Heart right ventricle (tissue), 16 donors: ENCODE measurements at regions of chr2 and their contacts with region 1.

Region 1: GRCh38 chr2:42944779-42945415 is 152.5 kb upstream of the HAAO start:
- DNase-seq: no peak
- ATAC-seq: no peak
- H3K4me3 ChIP-seq: no peak overlapping the region
- H3K27ac ChIP-seq: peak overlapping the region in 2 of 10 donors; percentile 23 to 66
- H3K4me1 ChIP-seq: peaks cover 0 to 43% (median 22%) of the 10 kb centered on the region in 9 donors
- H3K27me3 ChIP-seq: no peaks in the 10 kb centered on the region
- CTCF ChIP-seq: no peak

Region 2: DNA sequence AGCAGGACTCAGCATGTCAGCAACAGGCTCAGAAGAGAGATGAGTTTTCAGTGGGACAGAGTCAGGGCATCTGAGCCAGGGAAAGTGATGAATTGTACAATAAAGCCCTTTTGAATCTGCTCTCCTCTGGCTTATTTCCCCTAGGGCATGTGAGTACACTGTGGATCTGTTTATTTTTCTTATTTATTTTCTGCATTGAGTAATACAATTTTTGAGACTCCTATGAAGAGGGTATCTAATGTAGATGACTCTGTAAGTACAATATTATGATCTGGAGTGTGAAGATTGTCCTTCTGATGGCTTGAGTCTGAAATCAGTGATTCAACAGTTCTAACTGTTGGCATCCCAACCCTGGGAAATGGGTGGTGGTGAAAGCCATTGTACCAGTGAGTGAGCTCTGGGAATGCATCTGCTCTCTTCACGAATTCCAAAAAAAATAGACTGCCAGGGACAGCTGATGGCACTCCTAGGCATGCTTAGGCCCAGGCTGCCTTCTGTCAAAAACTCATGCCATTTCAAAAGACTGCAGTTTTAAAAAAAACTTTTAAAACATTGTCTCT is 201.4 kb before region 1 on chr2:
- intact Hi-C with region 1: no loop called
- DNase-seq: no peak
- ATAC-seq: no peak
- H3K4me3 ChIP-seq: no peak overlapping the region
- H3K27ac ChIP-seq: no peak overlapping the region
- H3K4me1 ChIP-seq: no peaks in the 10 kb centered on the region
- H3K27me3 ChIP-seq: no peaks in the 10 kb centered on the region
- CTCF ChIP-seq: no peak

Region 3: GRCh38 chr2:42859006-42859552 is 85.8 kb before region 1 on chr2:
- intact Hi-C with region 1: no loop called
- DNase-seq: peak in 1 of 2 donors; percentile 81
- ATAC-seq: peak in 2 of 8 donors; percentile 30 to 38
- H3K4me3 ChIP-seq: no peak overlapping the region
- H3K27ac ChIP-seq: peak overlapping the region in 6 of 10 donors; percentile 3 to 76 (median 44)
- H3K4me1 ChIP-seq: peaks cover 2 to 30% (median 17%) of the 10 kb centered on the region in 9 donors
- H3K27me3 ChIP-seq: no peaks in the 10 kb centered on the region
- CTCF ChIP-seq: peak; percentile 80 to 93 (median 88)

Region 4: GRCh38 chr2:43484323-43484930 is 539.5 kb after region 1 on chr2:
- intact Hi-C with region 1: loop called in 7 of 10 experiments (anchors 2 to 10 kb)
- DNase-seq: peak in 1 of 2 donors; percentile 20
- ATAC-seq: peak in 6 of 8 donors; percentile 60 to 68 (median 64)
- H3K4me3 ChIP-seq: no peak overlapping the region
- H3K27ac ChIP-seq: peak overlapping the region in 5 of 10 donors; percentile 13 to 69 (median 65)
- H3K4me1 ChIP-seq: peaks cover 8 to 48% (median 29%) of the 10 kb centered on the region in 9 donors
- H3K27me3 ChIP-seq: no peaks in the 10 kb centered on the region
- CTCF ChIP-seq: peak; percentile 27 to 83 (median 71)

Region 5: DNA sequence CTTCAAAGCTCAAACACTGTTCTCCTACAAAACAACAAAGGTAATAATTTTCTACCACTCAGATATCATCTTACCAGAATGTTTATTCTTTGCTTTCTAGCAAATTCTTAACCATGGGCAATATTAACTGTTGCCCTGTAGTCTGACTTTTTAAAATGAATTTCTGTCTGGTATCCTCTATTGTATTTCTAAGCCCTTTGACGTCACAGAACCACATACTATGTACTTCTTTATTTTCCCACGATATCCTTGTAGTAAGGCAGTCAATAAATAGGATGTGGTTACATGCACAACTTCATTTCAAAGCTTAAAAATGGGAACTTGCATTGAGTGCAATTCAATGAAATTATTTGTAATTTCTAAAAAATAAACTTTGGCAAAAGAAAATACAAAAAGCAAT is 592.2 kb after region 1 on chr2:
- intact Hi-C with region 1: loop called in 4 of 10 experiments (anchors 5 to 10 kb)
- DNase-seq: no peak
- ATAC-seq: no peak
- H3K4me3 ChIP-seq: no peak overlapping the region
- H3K27ac ChIP-seq: peak overlapping the region in 1 of 10 donors; percentile 17
- H3K4me1 ChIP-seq: peaks cover 0 to 50% (median 0%) of the 10 kb centered on the region in 9 donors
- H3K27me3 ChIP-seq: no peaks in the 10 kb centered on the region
- CTCF ChIP-seq: no peak

Region 6: GRCh38 chr2:43542285-43542937 is 597.5 kb after region 1 on chr2:
- intact Hi-C with region 1: loop called in 4 of 10 experiments (anchors 5 to 10 kb)
- DNase-seq: no peak
- ATAC-seq: peak in 3 of 8 donors; percentile 28 to 53 (median 46)
- H3K4me3 ChIP-seq: no peak overlapping the region
- H3K27ac ChIP-seq: no peak overlapping the region
- H3K4me1 ChIP-seq: peaks cover 0 to 42% (median 0%) of the 10 kb centered on the region in 9 donors
- H3K27me3 ChIP-seq: no peaks in the 10 kb centered on the region
- CTCF ChIP-seq: peak in 8 of 9 donors; percentile 52 to 80 (median 70)